Esophagus muscularis mucosa (tissue), 4 donors: ENCODE measurements at regions of chr13 and their contacts with region 1.

Region 1: DNA sequence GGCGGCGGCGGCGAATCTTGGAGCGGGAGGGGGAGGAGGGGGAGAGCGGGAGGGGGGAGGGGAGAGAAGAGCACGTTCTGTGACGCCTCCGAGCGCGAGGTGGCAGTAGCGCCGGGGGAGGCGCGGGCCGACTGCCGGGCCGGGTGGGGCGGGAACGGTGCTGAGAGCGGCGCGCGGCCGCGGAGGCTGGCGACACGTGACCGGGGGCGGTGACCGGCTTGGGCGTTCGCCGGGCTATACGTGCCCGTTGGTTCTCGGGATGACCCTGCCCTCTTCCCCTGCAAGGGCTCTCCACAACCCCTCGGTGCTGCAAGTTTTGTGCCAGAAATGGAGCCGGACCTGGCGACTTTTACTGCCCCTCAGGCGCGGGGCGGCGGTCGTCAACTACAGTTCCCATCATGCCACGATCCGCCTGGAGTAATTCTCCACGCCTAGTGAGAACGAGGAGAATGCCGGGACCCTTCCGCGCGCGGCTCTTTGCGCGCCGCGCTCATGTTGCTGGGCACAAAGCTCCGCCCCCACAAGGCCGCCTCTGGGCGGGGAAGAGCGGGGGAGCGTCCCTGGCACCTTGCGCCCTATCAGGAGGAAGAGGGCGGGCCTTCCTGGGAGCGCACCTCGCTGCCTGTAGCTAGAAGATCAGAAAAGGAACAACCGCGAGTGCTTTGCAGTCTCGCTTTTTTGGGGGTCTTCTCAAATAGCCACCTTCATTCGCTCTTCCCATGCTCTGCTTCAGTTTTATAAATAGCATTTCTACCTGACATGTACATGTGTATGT is at the start of gene KPNA3:
- DNase-seq: peak; percentile 98
- H3K4me3 ChIP-seq: peak within 1 kb of the TSS; percentile 95 to 99 (median 96)
- H3K27ac ChIP-seq: peak within 1 kb of the TSS; percentile 96 to 99 (median 98)
- H3K4me1 ChIP-seq: peaks cover 26 to 43% (median 40%) of the 10 kb centered on the region in 4 donors
- H3K27me3 ChIP-seq: no peaks in the 10 kb centered on the region
- CTCF ChIP-seq: peak in 1 of 3 experiments; percentile 13
- EP300 ChIP-seq: no peak
- POLR2A ChIP-seq: peak; percentile 33
- total RNA-seq, gene KPNA3: 47.9 to 66.4 (median 55.4) TPM

Region 2: GRCh38 chr13:48660361-48661076 is 1132.2 kb before region 1 on chr13:
- intact Hi-C with region 1: no loop called
- DNase-seq: peak; percentile 79
- H3K4me3 ChIP-seq: no peak overlapping the region
- H3K27ac ChIP-seq: peak overlapping the region in 3 of 4 donors; percentile 1 to 20 (median 11)
- H3K4me1 ChIP-seq: peaks cover 0 to 19% (median 16%) of the 10 kb centered on the region in 4 donors
- H3K27me3 ChIP-seq: no peaks in the 10 kb centered on the region
- CTCF ChIP-seq: no peak
- EP300 ChIP-seq: no peak
- POLR2A ChIP-seq: no peak

Region 3: GRCh38 chr13:49669735-49670309 is 122.9 kb before region 1 on chr13:
- intact Hi-C with region 1: loop called (anchors 5 kb)
- DNase-seq: no peak
- H3K4me3 ChIP-seq: no peak overlapping the region
- H3K27ac ChIP-seq: no peak overlapping the region
- H3K4me1 ChIP-seq: peaks cover 0 to 13% (median 0%) of the 10 kb centered on the region in 4 donors
- H3K27me3 ChIP-seq: no peaks in the 10 kb centered on the region
- CTCF ChIP-seq: peak; percentile 67 to 78 (median 69)
- EP300 ChIP-seq: no peak
- POLR2A ChIP-seq: no peak

Region 4: DNA sequence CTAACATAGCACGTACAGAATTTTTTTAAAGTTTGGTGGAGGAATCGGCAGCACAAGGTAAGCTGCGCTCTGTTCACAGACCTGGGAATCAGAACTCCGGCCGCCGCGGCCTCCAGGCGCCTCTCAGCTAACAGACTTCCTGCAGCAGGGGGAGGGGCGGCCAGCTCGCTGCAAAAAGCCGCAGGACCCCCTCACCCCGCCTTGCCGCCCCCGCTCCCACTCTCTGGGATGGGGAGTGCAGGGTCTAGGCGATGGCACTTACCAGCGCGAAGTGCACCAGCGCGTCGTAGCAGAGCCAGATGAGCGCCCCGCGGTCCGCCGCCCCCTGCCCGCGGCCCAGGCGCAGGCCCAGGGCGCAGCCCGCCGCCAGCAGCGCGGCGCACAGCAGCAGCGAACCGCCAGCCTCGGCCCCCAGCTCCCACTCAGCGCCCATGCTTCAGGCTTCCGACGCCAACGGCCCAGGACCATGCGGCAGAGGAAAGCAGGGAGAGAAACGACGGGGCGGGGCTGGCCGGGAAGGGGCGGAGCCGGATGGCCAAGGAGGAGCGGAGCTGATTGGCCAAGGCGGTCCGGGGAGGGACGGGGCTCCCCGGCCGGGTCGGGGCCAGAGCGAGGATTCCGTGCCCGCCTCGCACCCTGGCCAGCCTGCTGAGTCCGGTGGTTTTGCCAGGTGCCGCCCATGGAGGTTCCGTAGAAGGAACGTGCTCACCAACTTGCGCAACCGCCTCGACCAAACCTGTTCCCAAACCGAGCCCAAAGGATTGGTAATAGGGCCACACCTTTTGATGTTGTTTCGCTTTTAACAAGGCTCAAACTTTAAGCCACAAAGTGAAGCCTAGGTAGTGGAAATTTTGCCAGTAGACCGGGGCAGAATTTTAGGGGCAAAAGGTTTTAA is 101.5 kb before region 1 on chr13 and contains the start of gene EBPL:
- intact Hi-C with region 1: loop called (anchors 5 kb)
- DNase-seq: peak; percentile 99
- H3K4me3 ChIP-seq: peak within 1 kb of the TSS; percentile 73 to 96 (median 79)
- H3K27ac ChIP-seq: peak within 1 kb of the TSS; percentile 77 to 89 (median 82)
- H3K4me1 ChIP-seq: peaks cover 14 to 21% (median 16%) of the 10 kb centered on the region in 4 donors
- H3K27me3 ChIP-seq: no peaks in the 10 kb centered on the region
- CTCF ChIP-seq: no peak
- EP300 ChIP-seq: no peak
- POLR2A ChIP-seq: no peak
- total RNA-seq, gene EBPL: 17.0 to 56.4 (median 45.9) TPM

Region 5: DNA sequence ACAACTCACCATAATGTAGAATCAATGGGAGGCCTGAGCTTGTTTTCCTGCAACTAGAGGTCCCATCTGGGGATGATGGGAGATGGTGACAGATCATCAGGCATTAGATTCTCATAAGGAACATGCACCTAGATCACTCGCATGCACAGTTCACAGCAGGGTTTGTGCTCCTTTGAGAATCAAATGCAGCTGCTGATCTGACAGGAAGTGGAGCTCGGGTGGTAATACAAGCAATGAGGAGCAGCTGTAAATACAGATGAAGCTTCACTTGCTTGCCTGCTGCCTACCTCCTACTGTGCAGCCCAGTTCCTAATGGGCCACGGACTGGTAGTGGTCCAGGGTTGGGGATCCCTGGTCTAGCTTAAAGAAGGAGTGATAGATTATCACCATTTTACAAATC is 33.2 kb before region 1 on chr13:
- intact Hi-C with region 1: no loop called
- DNase-seq: no peak
- H3K4me3 ChIP-seq: no peak overlapping the region
- H3K27ac ChIP-seq: no peak overlapping the region
- H3K4me1 ChIP-seq: peaks cover 0 to 4% (median 0%) of the 10 kb centered on the region in 4 donors
- H3K27me3 ChIP-seq: no peaks in the 10 kb centered on the region
- CTCF ChIP-seq: no peak
- EP300 ChIP-seq: no peak
- POLR2A ChIP-seq: no peak